Aorta (tissue), 5 donors: ENCODE measurements at regions of chr1 and their contacts with region 1.

Region 1: DNA sequence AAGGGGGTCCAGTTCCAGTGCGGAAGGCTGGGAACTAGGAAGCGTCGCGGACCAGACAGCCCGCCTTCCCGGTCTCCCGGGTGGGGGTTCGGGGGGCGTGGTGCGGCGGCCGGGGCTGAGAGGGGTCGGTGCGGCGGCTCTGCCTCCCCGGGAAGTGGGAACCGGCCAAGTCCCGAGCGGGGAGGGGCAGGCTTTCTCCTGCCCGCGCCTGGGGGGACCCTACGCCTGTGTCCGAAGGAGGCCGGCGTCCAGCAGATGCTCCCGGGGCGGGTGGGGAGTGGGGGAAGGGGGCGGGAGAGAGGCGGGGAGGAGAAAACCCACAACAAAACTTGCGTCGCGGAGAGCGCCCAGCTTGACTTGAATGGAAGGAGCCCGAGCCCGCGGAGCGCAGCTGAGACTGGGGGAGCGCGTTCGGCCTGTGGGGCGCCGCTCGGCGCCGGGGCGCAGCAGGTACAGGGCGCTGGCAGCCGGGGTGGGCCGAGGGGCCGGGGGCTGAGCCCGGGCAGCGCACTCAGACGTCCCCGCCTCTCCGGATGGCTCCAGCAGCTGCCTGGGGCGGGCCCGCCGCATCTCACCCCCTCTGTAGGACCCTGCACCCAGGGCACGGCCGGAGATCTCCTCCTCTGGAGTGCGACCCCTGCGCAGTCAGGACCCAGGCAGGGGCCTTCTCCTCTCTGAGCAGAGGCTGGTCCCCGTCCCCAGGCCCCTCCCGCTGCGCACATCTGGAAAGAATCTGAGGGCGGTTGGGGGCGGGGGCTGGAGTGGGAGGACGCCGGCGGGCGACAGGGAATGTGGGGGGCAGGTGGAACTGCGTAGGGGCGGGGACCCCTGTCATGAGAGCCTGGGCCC is at the start of gene PODN:
- DNase-seq: peak; percentile 69 to 81
- ATAC-seq: peak; percentile 71
- H3K4me3 ChIP-seq: peak within 1 kb of the TSS; percentile 24 to 64
- H3K27ac ChIP-seq: no peak within 1 kb of the TSS
- H3K4me1 ChIP-seq: no peaks in the 10 kb centered on the region
- H3K27me3 ChIP-seq: no peaks in the 10 kb centered on the region
- total RNA-seq, gene PODN: 54.8 to 152 TPM

Region 2: DNA sequence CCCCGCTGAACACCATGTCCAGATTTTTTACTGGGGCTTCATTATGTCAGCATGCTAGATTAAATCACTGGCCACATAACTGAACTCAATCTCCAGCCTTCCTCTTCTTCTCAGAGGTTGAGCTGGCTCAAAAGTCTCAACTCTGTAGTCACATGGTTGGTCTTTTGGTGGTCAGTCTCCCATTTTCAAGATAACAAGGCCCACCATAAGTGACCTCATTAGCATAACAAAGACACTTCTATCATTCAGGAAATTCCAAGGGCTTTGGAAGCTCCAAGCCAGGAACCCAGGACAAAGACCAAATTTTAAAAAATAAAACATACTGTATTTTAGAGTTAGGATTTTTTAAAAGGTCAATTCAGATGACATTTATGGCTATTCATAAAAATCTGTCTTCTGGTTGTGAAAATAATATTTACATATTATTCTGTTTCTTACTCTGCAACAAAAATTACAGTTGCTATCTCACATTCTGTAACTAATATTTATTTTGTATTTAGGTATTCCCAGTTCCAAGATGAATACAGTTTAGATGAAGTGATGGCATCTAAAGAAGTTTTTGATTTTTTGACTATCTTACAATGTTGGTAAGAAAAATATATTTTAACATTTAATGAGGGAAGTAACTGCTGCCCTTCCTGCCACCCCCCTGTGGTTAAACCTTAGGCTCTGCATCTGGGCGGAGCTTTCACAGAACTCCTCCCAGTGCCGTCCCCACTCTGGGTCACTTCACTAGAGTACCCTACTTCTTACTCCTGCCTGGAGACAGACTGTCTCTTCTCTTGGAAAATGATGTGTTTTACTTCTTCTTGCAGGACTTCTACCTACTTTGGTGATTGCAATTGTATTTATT is 85.7 kb before region 1 on chr1:
- intact Hi-C with region 1: no loop called
- DNase-seq: no peak
- ATAC-seq: no peak
- H3K4me3 ChIP-seq: no peak overlapping the region
- H3K27ac ChIP-seq: no peak overlapping the region
- H3K4me1 ChIP-seq: no peaks in the 10 kb centered on the region
- H3K27me3 ChIP-seq: no peaks in the 10 kb centered on the region

Region 3: DNA sequence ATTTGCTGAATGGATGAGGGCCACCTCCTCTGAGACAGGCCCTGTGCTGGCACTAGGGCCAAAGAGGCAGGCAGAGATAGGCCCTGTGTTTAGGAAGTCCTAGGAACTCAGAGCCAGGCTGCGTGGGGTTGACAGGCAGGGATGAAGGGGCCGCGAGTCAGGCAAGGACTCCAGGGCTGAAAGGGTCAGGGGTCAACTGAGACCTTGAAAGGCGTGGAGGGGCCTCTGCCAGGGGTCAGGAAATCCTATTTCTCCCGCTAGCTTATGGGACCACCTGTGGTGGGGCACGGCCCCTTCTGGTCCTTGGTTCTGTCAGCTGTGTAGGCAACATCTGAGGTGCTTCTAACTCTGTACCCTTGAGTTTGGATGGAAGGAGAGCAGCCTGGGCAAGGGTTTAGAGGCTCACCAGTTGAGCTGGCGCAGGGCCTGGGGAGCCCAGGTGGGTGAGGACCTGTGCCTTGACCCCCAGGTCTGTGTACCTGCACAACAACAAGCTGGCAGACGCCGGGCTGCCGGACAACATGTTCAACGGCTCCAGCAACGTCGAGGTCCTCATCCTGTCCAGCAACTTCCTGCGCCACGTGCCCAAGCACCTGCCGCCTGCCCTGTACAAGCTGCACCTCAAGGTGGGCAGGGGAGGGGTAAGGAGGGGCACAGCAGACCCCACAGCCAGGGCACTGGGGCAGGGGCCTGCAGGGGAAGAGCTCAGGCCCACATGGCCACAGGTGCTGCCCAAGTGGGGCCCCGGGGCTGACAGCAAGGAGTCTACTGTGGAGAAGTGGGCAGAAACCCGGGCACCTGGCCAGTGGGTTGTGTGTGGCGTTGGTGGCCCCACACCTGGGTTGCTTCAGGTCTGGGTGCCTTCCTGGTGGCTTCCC is 14.9 kb after region 1 on chr1:
- intact Hi-C with region 1: no loop called
- DNase-seq: peak; percentile 47 to 65
- ATAC-seq: no peak
- H3K4me3 ChIP-seq: no peak overlapping the region
- H3K27ac ChIP-seq: no peak overlapping the region
- H3K4me1 ChIP-seq: no peaks in the 10 kb centered on the region
- H3K27me3 ChIP-seq: no peaks in the 10 kb centered on the region

Region 4: GRCh38 chr1:53172426-53173128 is 110.5 kb after region 1 on chr1:
- intact Hi-C with region 1: loop called in 1 of 2 experiments (anchors 10 kb)
- DNase-seq: no peak
- ATAC-seq: peak; percentile 42
- H3K4me3 ChIP-seq: no peak overlapping the region
- H3K27ac ChIP-seq: no peak overlapping the region
- H3K4me1 ChIP-seq: peaks cover 0 to 4% of the 10 kb centered on the region in 2 donors
- H3K27me3 ChIP-seq: no peaks in the 10 kb centered on the region